Ascending aorta (tissue), 2 donors: ENCODE measurements at regions of chr2 and their contacts with region 1.

Region 1: DNA sequence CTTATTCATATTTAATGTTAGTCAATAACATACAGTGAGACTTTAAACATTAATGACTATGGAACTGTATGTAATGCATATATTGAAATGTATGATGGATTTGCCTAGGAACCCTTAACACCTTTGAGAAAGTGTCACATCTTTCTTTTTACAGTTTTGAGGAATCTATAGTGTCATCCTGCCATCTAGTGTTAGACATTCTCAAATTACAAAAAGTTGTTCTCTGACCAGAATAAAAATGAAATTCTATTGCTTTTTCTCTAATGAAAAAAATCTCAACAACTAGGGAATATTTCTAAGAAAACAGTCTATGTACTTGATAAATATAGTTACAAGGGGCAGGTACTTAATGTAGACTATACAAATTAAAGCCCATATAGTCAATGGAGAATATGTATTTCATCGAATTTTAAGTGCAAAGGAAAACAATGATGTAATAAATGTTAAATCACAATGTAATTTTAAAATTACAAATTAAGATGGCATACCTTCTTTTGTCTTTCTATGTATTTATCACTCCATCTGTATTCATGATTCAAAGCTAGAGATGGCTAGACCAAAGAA is 5.1 kb upstream of the CALCRL start:
- DNase-seq: no peak
- H3K4me3 ChIP-seq: no peak overlapping the region
- H3K27ac ChIP-seq: no peak overlapping the region
- H3K4me1 ChIP-seq: no peaks in the 10 kb centered on the region
- H3K27me3 ChIP-seq: no peaks in the 10 kb centered on the region
- CTCF ChIP-seq: peak; percentile 16 to 53 (median 42)

Region 2: DNA sequence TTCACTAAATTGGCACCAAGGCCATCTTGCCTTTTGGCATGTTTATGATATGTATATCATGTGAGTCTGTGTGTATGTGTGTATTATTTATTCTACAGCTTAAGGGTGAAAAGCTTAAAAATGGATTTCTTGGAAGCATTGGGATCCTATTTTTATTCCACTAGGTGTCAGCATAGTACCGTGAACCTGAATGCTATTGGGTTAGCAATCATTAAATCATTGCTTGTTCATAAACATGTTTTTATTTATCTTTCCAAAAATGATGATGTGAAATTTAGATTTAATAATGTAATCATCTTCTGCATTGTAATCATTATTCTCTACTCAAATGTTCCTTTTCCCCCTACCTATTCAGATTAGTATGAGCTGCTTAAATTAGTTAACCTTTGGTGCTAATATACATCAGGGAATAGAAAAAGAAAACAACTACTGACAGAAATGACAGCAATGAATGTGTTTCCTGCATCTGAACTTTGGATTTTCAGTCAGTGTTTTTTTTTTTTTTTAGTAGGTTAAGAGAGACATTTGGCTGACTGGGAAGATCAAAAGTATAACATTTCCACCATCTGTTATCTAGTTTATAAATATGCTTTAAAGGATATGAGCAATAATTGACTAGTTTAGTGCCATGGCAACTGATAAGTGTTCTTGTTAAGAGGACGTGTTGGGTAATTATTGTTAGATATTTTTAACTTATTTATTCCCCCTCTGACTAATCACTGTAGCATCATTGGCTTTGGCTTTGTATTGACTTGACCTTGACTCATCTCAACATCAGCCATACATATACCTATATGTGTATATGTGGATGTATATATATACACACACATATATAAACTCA is 590.1 kb before region 1 on chr2:
- intact Hi-C with region 1: loop called (anchors 1 kb)
- DNase-seq: no peak
- H3K4me3 ChIP-seq: no peak overlapping the region
- H3K27ac ChIP-seq: no peak overlapping the region
- H3K4me1 ChIP-seq: no peaks in the 10 kb centered on the region
- H3K27me3 ChIP-seq: no peaks in the 10 kb centered on the region
- CTCF ChIP-seq: peak; percentile 43 to 75 (median 52)

Region 3: DNA sequence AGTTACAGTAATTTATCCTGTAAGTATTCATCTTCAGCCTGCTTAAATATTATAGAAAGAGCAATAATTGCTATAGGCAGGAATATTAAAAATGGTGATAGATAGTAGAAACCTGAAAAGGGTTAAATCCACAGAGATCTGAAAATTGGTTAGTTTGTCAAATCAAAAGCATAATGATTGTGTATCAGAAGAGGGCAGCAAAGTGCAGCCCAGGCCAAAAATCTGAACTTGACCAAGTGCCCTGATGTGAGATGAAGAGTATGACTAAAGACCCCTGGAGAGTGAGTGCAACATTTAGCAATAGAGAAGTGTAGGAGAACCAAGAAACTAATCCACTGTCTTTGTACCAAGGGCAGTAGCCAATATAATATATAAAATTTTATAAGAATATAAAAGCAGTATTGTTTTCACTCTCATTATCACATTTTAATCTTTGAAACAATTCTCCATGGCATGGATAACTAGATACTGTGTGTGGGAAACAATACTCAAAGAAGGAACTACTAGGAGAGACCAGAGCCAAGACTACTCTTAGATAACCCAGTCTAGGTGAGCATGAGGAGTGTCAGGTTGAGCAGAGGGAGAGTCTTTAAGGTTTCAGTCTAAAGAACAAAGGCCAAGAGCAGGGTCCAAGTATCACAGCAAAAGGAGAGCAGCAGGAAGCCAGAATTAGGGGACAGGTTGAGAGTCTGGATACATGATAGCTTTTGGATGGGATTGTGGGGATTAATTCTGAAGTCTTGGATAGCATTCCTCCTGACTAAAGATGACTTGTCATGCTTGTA is 153.8 kb before region 1 on chr2:
- intact Hi-C with region 1: loop called (anchors 2 kb)
- DNase-seq: no peak
- H3K4me3 ChIP-seq: no peak overlapping the region
- H3K27ac ChIP-seq: no peak overlapping the region
- H3K4me1 ChIP-seq: no peaks in the 10 kb centered on the region
- H3K27me3 ChIP-seq: no peaks in the 10 kb centered on the region
- CTCF ChIP-seq: peak in 1 of 3 experiments; percentile 17

Region 4: GRCh38 chr2:187581125-187581896 is 128.2 kb after region 1 on chr2:
- intact Hi-C with region 1: no loop called
- DNase-seq: no peak
- H3K4me3 ChIP-seq: peak overlapping the region; percentile 39 to 52
- H3K27ac ChIP-seq: no peak overlapping the region
- H3K4me1 ChIP-seq: no peaks in the 10 kb centered on the region
- H3K27me3 ChIP-seq: no peaks in the 10 kb centered on the region
- CTCF ChIP-seq: peak; percentile 59 to 66 (median 65)